HepG2 (cell line): ENCODE measurements at regions of chr10 and their contacts with region 1.

Region 1: DNA sequence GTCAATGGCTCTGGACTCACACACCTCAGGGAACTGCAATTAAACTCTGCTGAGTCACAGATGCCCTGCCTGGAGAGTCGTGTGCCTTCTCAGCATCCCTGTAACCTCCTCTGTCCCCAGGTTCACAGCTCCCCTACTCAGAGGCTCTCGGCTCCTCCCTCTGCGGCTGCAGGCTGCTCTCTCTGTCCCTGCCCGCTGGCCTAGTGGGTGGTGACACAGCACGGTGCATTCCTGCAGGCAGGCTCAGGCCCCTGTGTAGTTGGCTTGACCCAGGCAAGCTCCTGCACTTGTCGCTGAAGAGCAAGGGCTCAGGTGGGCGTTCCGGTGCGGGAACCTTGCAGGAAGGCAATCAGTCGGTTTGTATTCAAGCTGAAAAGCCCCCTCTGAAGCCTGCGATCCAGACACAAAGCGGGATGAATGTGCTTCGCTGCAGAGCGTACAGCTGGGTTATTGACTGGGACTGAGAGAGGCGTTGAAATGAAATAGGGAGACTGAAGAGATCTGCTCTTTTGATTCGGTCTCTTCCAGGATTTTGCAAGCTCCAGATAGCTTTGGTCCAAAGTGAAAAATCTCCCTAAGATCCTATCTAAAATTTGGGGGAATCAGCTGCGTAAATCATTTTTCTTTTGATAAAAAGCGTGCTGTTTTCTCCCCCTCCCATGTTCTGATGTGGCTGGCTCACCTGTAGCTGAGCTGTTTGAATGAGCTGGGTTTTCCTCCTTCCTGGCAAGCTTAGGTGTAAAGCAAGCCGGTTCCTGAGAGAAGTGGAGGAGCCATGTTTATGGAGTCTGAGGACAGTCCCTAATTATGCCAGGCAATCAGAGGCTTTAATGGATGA is 208.7 kb upstream of the PHYHIPL start:
- DNase-seq: peak; percentile 93
- ATAC-seq: peak; percentile 99
- H3K4me3 ChIP-seq: peak overlapping the region; percentile 33 to 72 (median 55)
- H3K27ac ChIP-seq: peak overlapping the region; percentile 77
- H3K4me1 ChIP-seq: peaks cover 84% of the 10 kb centered on the region
- H3K27me3 ChIP-seq: no peaks in the 10 kb centered on the region
- CTCF ChIP-seq: peak; percentile 31; the same call in 1 of the 2 replicates
- EP300 ChIP-seq: peak; percentile 39 to 60; a peak in 3 of 4 replicates
- POLR2A ChIP-seq: peak; percentile 71 to 85
- RAD21 ChIP-seq: peak; percentile 45; the same call in 1 of the 2 replicates

Region 2: GRCh38 chr10:58873161-58873560 is 94.6 kb before region 1 on chr10:
- CTCF ChIA-PET with region 1: no interaction called
- POLR2A ChIA-PET with region 1: no interaction called
- in situ Hi-C with region 1: no loop called
- intact Hi-C with region 1: no loop called
- DNase-seq: no peak
- ATAC-seq: no peak
- H3K4me3 ChIP-seq: no peak overlapping the region
- H3K27ac ChIP-seq: no peak overlapping the region
- H3K4me1 ChIP-seq: peaks cover 7% of the 10 kb centered on the region
- H3K27me3 ChIP-seq: no peaks in the 10 kb centered on the region
- CTCF ChIP-seq: no peak
- EP300 ChIP-seq: no peak
- POLR2A ChIP-seq: no peak
- RAD21 ChIP-seq: no peak

Region 3: DNA sequence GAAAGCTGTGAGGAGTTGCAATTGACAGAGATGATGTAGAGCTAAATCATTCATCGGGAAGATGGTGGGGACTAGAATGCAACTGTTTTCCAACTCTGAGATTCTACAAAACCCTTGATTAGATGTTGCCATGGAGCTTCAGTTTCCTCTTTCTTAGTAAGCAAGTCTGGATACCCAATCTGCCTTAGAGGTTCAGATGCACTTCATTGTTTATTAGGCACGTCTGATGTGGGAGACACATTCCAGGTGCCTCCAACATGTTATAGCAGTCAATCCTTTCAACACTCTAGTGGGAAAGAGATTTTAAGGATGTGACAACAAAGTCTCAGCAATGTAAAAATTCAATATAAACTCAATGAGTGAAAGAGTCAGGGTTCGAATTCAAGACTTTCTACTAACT is 82.6 kb before region 1 on chr10:
- CTCF ChIA-PET with region 1: no interaction called
- POLR2A ChIA-PET with region 1: no interaction called
- in situ Hi-C with region 1: no loop called
- intact Hi-C with region 1: no loop called
- DNase-seq: no peak
- ATAC-seq: no peak
- H3K4me3 ChIP-seq: no peak overlapping the region
- H3K27ac ChIP-seq: no peak overlapping the region
- H3K4me1 ChIP-seq: no peaks in the 10 kb centered on the region
- H3K27me3 ChIP-seq: no peaks in the 10 kb centered on the region; a peak in 1 of 5 replicates
- CTCF ChIP-seq: no peak
- EP300 ChIP-seq: no peak
- POLR2A ChIP-seq: no peak
- RAD21 ChIP-seq: no peak

Region 4: GRCh38 chr10:58993480-58994221 is 25.9 kb after region 1 on chr10:
- CTCF ChIA-PET with region 1: no interaction called
- POLR2A ChIA-PET with region 1: interaction called, 78 read pairs
- in situ Hi-C with region 1: no loop called
- intact Hi-C with region 1: loop called (anchors 1 kb)
- DNase-seq: no peak
- ATAC-seq: no peak
- H3K4me3 ChIP-seq: peak overlapping the region in 1 of 3 experiments; percentile 23; a peak in 1 of 6 replicates
- H3K27ac ChIP-seq: peak overlapping the region; percentile 89
- H3K4me1 ChIP-seq: peaks cover 96% of the 10 kb centered on the region
- H3K27me3 ChIP-seq: no peaks in the 10 kb centered on the region
- CTCF ChIP-seq: no peak
- EP300 ChIP-seq: no peak
- POLR2A ChIP-seq: no peak
- RAD21 ChIP-seq: no peak

Region 5: GRCh38 chr10:59036311-59037017 is 68.7 kb after region 1 on chr10:
- CTCF ChIA-PET with region 1: no interaction called
- POLR2A ChIA-PET with region 1: interaction called, 10 read pairs
- in situ Hi-C with region 1: no loop called
- intact Hi-C with region 1: loop called (anchors 2 kb)
- DNase-seq: peak; percentile 75
- ATAC-seq: peak; percentile 94
- H3K4me3 ChIP-seq: peak overlapping the region in 1 of 3 experiments; percentile 29; a peak in 1 of 6 replicates
- H3K27ac ChIP-seq: peak overlapping the region; percentile 87
- H3K4me1 ChIP-seq: peaks cover 66% of the 10 kb centered on the region
- H3K27me3 ChIP-seq: no peaks in the 10 kb centered on the region
- CTCF ChIP-seq: no peak
- EP300 ChIP-seq: 0 out of 4 replicates have a peak, but pooled peaks of 1 of the 2 experiments have one; percentile 14
- POLR2A ChIP-seq: no peak
- RAD21 ChIP-seq: no peak

Region 6: GRCh38 chr10:59060852-59061251 is 93.1 kb after region 1 on chr10:
- CTCF ChIA-PET with region 1: no interaction called
- POLR2A ChIA-PET with region 1: interaction called, 15 read pairs
- in situ Hi-C with region 1: no loop called
- intact Hi-C with region 1: loop called (anchors 1 kb)
- DNase-seq: no peak
- ATAC-seq: no peak
- H3K4me3 ChIP-seq: no peak overlapping the region
- H3K27ac ChIP-seq: no peak overlapping the region
- H3K4me1 ChIP-seq: peaks cover 82% of the 10 kb centered on the region
- H3K27me3 ChIP-seq: no peaks in the 10 kb centered on the region
- CTCF ChIP-seq: no peak
- EP300 ChIP-seq: no peak
- POLR2A ChIP-seq: no peak
- RAD21 ChIP-seq: no peak

Region 7: GRCh38 chr10:59079386-59080226 is 111.8 kb after region 1 on chr10:
- CTCF ChIA-PET with region 1: no interaction called
- POLR2A ChIA-PET with region 1: interaction called, 7 read pairs
- in situ Hi-C with region 1: loop called (anchors 10 kb)
- intact Hi-C with region 1: no loop called
- DNase-seq: peak; percentile 39
- ATAC-seq: no peak
- H3K4me3 ChIP-seq: no peak overlapping the region
- H3K27ac ChIP-seq: peak overlapping the region; percentile 35
- H3K4me1 ChIP-seq: peaks cover 67% of the 10 kb centered on the region
- H3K27me3 ChIP-seq: no peaks in the 10 kb centered on the region
- CTCF ChIP-seq: no peak
- EP300 ChIP-seq: peak in 1 of 2 experiments; percentile 31; a peak in 1 of 4 replicates
- POLR2A ChIP-seq: no peak
- RAD21 ChIP-seq: no peak